ENCODE measurements at regions of chr2 and their contacts with region 1.

Region 1: DNA sequence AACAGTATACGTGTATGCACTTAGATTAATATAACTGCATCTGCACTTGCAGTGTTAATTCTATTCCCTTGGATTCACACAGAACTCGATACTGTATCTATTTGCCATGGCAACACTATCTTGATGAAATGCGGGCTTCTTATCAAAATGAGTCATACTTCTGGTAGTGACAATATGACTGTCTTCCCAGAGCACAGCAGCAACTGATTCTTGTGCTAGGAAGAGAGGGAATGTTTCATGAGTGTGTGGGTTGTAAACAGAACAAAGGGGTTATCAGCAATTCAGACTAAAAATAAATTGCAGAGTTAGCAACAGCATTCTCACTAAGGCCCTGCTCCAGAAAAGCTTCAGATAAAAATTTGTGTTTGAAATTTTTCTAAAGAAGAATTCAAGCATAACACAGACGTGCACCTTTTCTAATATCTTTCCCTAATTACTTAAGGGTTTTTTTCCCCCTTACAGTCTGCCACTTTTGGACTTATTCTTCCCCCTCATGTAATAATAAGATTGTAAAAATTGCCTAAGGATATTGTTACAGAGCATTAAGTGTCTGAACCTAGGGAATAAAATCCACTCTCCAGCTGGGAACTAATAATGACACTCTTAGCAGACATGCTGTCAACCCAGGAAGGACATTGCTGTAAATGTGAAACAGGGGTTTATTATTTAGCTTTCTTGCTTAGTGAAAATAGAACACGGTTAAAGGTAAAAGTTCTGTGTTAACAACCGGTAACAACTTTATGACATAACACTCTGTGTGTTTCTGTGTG is 99.9 kb upstream of the SLC38A11 start:
- DNase-seq: no peak
- H3K4me3 Mint-ChIP-seq: no peak overlapping the region
- H3K27ac Mint-ChIP-seq: no peak overlapping the region
- H3K4me1 Mint-ChIP-seq: peaks cover 9% of the 10 kb centered on the region
- H3K27me3 Mint-ChIP-seq: no peaks in the 10 kb centered on the region
- CTCF ChIP-seq: no peak

Region 2: GRCh38 chr2:164761740-164762460 is 293.4 kb before region 1 on chr2:
- CTCF ChIA-PET with region 1: no interaction called
- intact Hi-C with region 1: no loop called
- DNase-seq: no peak
- H3K4me3 Mint-ChIP-seq: no peak overlapping the region
- H3K27ac Mint-ChIP-seq: peak overlapping the region; percentile 39
- H3K4me1 Mint-ChIP-seq: peaks cover 36% of the 10 kb centered on the region
- H3K27me3 Mint-ChIP-seq: no peaks in the 10 kb centered on the region
- CTCF ChIP-seq: no peak

Region 3: DNA sequence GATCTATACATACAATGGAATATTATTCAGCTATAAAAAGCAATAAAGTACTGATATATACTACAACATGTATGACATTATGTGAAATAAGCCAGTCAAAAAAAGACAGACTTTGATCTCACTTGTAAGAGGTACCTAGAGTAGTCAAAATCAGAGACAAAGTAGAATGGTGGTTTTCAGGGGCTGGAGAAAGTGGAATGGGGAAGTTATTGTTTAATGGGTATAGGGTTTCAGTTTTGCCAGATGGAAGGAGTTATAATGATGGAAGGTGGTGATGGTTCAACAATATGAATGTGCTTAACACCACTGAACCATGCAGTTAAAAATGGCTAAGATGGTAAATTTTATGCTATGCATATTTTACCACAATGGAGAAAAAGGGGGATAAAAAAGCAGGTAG is 220.0 kb before region 1 on chr2:
- CTCF ChIA-PET with region 1: interaction called, 10 read pairs
- intact Hi-C with region 1: no loop called
- DNase-seq: no peak
- H3K4me3 Mint-ChIP-seq: no peak overlapping the region
- H3K27ac Mint-ChIP-seq: peak overlapping the region; percentile 14
- H3K4me1 Mint-ChIP-seq: peaks cover 31% of the 10 kb centered on the region
- H3K27me3 Mint-ChIP-seq: no peaks in the 10 kb centered on the region
- CTCF ChIP-seq: no peak

Region 4: GRCh38 chr2:164933671-164934189 is 121.5 kb before region 1 on chr2:
- CTCF ChIA-PET with region 1: no interaction called
- intact Hi-C with region 1: no loop called
- DNase-seq: no peak
- H3K4me3 Mint-ChIP-seq: no peak overlapping the region
- H3K27ac Mint-ChIP-seq: no peak overlapping the region
- H3K4me1 Mint-ChIP-seq: peaks cover 35% of the 10 kb centered on the region
- H3K27me3 Mint-ChIP-seq: no peaks in the 10 kb centered on the region
- CTCF ChIP-seq: no peak

Region 5: DNA sequence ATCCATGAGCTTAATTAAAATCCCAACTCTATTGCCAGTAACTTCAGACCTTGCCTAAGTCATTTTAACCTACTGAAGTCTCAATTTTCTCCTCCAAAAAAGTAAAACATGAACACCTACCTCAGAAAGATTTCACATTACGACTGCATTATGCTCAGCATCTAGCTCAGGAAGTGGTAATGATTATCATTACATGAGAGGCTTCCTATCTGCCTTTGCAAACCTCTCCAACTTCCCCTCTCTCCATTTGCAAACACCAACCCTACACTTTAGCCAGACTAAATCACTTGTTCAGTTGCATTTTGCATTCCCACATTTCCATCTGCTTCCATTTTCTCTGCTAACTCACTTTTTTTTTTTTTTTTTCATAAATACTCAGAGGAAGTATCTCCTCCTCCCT is 106.7 kb before region 1 on chr2:
- CTCF ChIA-PET with region 1: no interaction called
- intact Hi-C with region 1: no loop called
- DNase-seq: no peak
- H3K4me3 Mint-ChIP-seq: no peak overlapping the region
- H3K27ac Mint-ChIP-seq: no peak overlapping the region
- H3K4me1 Mint-ChIP-seq: peaks cover 7% of the 10 kb centered on the region
- H3K27me3 Mint-ChIP-seq: no peaks in the 10 kb centered on the region
- CTCF ChIP-seq: no peak